ENCODE measurements at regions of chr11 and their contacts with region 1.

Region 1: GRCh38 chr11:44095506-44096394 is at the start of gene EXT2:
- DNase-seq: peak; percentile 96
- CTCF ChIP-seq: peak; percentile 92

Region 2: GRCh38 chr11:44067266-44067665 is 28.5 kb before region 1 on chr11:
- CTCF ChIA-PET with region 1: interaction called, 26 read pairs
- POLR2A ChIA-PET with region 1: no interaction called
- DNase-seq: no peak
- CTCF ChIP-seq: no peak

Region 3: DNA sequence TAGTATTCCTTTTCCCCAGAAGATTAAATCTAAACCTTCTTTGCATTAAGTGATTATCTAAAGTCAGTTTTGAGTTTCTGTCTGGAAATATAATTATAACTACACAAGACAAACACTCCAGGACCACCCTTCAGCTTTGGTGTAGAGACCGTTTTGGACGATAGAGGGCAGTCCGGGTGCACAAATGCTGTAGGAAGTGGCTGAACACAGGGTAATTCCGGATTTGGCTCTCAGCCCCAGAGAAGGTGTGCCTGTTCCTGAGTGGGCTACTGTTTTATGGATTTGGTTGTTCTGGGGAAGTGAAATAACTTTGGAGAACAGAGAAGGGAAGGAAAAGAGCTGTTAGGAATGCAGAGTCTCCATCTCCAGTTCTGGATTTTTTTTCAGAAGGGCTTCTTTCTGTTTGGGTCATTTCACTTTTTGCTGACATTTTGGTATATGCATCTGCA is 14.5 kb after region 1 on chr11:
- CTCF ChIA-PET with region 1: interaction called, 105 read pairs
- POLR2A ChIA-PET with region 1: no interaction called
- DNase-seq: peak; percentile 60
- CTCF ChIP-seq: peak; percentile 79

Region 4: DNA sequence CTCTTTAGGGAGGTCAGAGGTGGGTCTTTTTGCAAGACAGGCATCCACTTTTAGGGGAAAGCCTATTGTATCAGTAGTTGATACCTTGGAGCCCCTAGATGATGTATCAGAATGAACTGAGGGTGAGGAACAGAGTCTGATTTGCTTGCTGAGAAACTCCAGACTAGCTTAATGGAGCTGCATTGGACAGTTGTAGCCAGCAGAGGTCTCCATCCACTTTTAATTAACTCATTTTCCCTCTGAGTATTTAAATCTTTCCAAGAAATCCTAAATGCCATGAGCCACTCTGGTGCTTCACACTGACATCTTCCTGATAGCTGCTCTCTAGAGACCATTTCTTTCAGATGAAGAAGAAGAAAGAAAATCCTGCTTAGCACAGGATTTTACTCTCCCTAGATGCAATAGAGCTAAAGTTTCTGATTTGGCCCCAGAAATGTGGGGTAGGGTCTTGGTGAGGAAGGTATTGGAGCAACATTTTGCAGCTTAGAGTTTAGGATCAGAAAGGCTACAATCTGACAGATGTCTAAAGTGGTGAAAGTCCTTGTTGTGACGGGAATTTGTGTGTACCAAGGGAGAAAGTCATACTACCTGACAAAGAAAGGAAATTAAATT is 37.7 kb after region 1 on chr11:
- CTCF ChIA-PET with region 1: interaction called, 21 read pairs
- POLR2A ChIA-PET with region 1: no interaction called
- DNase-seq: peak; percentile 20
- CTCF ChIP-seq: peak; percentile 37

Region 5: DNA sequence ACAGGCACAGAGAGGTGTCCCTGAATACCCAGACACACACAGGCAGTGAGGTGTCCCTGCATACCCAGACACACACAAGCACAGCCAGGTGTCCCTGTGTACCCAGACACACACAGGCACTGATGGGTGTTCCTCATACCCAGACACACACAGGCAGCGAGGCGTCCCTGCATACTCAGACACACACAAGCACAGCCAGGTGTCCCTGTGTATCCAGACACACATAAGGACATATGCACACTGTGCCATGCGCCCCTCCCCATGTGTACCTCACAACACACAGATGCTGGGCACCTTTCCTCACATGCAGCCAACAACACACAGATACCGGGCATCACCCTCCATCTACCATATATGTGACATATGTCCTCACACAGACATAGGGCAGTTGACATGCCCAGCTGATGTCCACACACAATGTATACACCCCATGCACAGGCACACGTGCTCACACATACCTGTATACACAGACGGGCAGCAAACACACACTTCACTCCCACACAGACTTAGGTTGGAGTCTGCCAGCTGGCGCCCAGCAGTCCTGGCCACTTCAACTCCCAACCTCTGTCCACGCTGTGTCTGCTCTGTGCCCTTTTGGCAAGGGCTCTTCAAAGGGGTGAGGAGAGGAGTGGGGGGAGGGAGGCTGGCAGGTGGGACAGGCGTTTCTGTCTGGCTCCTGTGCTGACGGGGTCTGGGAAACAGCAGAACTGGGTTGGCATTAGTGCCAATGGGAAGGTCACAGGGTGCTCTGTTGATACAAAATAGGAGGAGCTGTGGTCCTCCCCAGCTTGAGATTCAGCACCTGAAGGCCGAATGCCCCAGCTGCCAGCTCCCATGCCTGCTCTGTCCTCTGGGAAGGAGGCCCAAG is 283.6 kb after region 1 on chr11:
- CTCF ChIA-PET with region 1: no interaction called
- POLR2A ChIA-PET with region 1: no interaction called
- DNase-seq: no peak
- CTCF ChIP-seq: no peak

Region 6: GRCh38 chr11:44556735-44557409 is 461.1 kb after region 1 on chr11:
- CTCF ChIA-PET with region 1: interaction called, 12 read pairs
- POLR2A ChIA-PET with region 1: no interaction called
- DNase-seq: no peak
- CTCF ChIP-seq: peak; percentile 88